Calu3 (cell line): ENCODE measurements at regions of chr1 and their contacts with region 1.

Region 1: DNA sequence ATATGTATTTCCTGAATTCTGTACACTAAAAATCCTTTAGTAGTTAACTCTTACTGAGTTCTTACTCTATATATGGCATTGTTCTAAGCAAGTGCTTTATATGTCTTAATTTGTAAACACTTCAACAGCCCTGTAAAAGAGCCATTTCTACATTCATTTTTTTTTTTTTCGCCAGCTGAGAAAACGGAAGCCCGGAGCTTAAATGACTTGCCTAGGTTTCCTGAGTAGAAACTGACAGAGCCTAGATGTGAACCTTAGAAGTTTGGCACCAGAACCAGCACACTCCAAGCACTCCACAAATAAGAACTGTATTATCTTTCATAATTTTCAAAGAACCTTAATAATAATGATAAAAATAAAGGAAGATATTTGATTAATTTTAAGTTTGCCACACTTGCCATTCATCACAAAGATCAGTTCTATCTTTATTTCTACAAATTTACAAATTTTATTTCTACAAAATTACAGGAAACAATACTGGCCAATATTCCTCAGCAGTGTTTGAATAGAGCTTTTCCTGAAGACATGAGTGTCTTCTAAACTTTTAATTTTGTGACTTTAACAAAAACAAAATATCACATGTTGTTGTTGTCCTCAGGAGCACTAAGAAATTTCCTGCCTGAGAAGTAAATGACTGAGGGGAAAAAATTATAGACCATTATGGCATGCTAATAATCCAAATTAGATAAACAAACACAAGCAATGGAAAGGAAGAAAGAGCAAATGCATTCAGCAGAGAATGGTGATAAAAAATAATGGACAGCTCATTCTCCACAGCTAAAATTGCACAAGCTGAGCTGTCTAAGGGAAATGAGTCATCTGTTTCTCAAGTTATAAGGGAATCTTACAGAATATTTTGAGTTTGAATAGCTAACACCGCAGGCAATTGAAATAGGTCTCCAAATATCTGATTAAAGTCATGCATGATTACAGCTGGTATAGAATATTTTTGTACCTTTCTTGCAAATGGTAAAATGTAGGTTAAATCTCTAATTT is 71.2 kb downstream of the DPYD start:
- DNase-seq: no peak
- H3K4me3 Mint-ChIP-seq: no peak overlapping the region
- H3K27ac Mint-ChIP-seq: no peak overlapping the region
- H3K4me1 Mint-ChIP-seq: peaks cover 8% of the 10 kb centered on the region
- H3K27me3 Mint-ChIP-seq: no peaks in the 10 kb centered on the region
- CTCF ChIP-seq: no peak

Region 2: GRCh38 chr1:97893844-97894243 is 44.2 kb after region 1 on chr1:
- CTCF ChIA-PET with region 1: no interaction called
- intact Hi-C with region 1: loop called (anchors 5 kb)
- DNase-seq: no peak
- H3K4me3 Mint-ChIP-seq: no peak overlapping the region
- H3K27ac Mint-ChIP-seq: no peak overlapping the region
- H3K4me1 Mint-ChIP-seq: no peaks in the 10 kb centered on the region
- H3K27me3 Mint-ChIP-seq: no peaks in the 10 kb centered on the region
- CTCF ChIP-seq: no peak

Region 3: GRCh38 chr1:97999320-97999719 is 149.7 kb after region 1 on chr1:
- CTCF ChIA-PET with region 1: no interaction called
- intact Hi-C with region 1: no loop called
- DNase-seq: no peak
- H3K4me3 Mint-ChIP-seq: no peak overlapping the region
- H3K27ac Mint-ChIP-seq: no peak overlapping the region
- H3K4me1 Mint-ChIP-seq: peaks cover 9% of the 10 kb centered on the region
- H3K27me3 Mint-ChIP-seq: no peaks in the 10 kb centered on the region
- CTCF ChIP-seq: no peak

Region 4: GRCh38 chr1:98429965-98430443 is 580.4 kb after region 1 on chr1:
- CTCF ChIA-PET with region 1: no interaction called
- intact Hi-C with region 1: no loop called
- DNase-seq: peak; percentile 58
- H3K4me3 Mint-ChIP-seq: no peak overlapping the region
- H3K27ac Mint-ChIP-seq: no peak overlapping the region
- H3K4me1 Mint-ChIP-seq: peaks cover 34% of the 10 kb centered on the region
- H3K27me3 Mint-ChIP-seq: no peaks in the 10 kb centered on the region
- CTCF ChIP-seq: no peak